ENCODE measurements at regions of chr14 and their contacts with region 1.

Region 1: DNA sequence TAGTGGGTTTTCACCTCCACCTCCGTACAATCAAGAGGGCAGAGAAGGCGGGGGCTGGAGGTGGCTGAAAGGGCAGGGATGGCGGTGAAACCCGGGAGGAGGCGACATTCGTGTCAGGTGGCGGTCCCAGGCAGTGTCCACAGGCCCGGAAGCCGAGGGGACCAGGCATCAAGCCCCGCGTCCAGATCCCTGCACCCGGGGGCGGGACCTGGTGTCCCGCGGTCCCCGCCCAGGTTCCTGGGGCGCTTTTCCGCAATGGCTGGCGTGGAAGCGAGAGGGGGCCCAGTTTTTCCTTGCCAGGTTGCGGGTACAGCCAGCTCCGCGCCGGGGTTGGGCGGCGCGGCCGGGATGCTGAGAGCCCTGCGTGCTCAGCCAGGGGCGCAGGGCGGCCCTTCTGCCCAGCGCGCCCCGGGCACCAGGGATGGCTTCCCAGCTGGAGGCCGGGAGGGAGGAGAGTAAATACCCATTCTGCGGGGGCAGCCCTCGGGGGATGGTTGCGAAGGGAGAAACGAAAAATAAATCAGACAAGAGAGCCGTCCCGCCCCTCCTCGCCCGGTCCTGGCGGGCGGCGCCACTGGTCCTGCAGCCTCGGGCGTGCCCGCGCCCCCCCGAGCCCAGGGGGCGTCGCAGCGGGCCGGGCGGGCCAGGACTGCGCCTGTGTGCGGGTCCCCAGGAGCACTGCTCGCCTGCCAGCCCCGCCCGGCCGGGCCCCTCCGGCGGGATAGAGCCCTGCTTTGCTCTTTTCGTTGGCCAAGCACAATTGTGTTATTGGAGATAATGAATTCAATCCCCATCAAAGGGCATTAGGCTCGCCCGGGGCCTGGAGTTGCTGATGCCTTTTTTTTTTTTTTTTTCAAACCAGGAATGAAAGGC is 11.5 kb downstream of the FOXA1 start:
- DNase-seq: no peak

Region 2: DNA sequence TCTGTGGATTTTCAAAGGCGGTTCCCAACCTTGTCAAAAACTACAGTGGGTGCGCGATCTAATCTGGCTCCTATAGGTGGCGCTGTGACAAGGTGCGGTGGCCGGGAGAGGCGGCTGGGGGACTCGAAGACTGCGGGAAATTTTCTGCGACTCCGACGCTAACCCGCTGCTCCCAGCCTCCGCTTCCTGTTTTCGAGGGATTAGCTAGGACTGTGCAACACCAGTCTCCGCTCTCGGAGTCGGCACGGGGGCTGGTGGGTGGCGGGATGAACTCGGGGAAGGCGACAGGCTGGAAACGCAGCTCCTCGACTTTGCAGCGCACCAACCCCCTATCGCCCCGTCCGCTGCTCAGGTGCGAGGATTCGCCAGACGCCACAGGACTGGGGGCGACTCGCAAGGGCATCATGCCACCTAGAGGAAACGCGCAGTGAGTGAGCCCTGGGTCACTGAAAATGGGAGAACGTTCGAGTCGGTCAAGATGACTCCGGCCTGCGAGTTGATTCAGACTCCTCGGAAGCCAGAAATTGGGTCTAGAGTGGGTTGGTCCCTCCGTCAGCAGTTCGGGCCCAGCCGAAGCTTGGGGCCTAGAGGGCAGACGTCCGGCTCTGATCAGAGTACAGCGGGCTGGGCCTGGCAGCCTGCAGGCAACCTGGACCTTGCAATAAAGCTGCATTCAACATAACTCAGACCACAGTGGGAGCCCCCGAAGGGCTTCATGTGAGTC is 927.5 kb before region 1 on chr14:
- intact Hi-C with region 1: loop called (anchors 10 kb)
- DNase-seq: no peak